Mammary epithelial cell (primary cell): ENCODE measurements at regions of chr20 and their contacts with region 1.

Region 1: GRCh38 chr20:50518270-50518721 is 8.1 kb downstream of the PTPN1 start:
- DNase-seq: peak; percentile 28
- H3K4me3 ChIP-seq: no peak overlapping the region
- H3K27ac ChIP-seq: peak overlapping the region; percentile 21
- H3K4me1 ChIP-seq: peaks cover 59% of the 10 kb centered on the region
- H3K27me3 ChIP-seq: no peaks in the 10 kb centered on the region
- CTCF ChIP-seq: no peak

Region 2: GRCh38 chr20:50534567-50535551 is 16.6 kb after region 1 on chr20:
- CTCF ChIA-PET with region 1: no interaction called
- dilution Hi-C with region 1: no loop called
- in situ Hi-C with region 1: no loop called
- intact Hi-C with region 1: loop called (anchors 2 kb)
- DNase-seq: no peak
- H3K4me3 ChIP-seq: no peak overlapping the region
- H3K27ac ChIP-seq: no peak overlapping the region
- H3K4me1 ChIP-seq: peaks cover 2% of the 10 kb centered on the region
- H3K27me3 ChIP-seq: no peaks in the 10 kb centered on the region
- CTCF ChIP-seq: no peak

Region 3: DNA sequence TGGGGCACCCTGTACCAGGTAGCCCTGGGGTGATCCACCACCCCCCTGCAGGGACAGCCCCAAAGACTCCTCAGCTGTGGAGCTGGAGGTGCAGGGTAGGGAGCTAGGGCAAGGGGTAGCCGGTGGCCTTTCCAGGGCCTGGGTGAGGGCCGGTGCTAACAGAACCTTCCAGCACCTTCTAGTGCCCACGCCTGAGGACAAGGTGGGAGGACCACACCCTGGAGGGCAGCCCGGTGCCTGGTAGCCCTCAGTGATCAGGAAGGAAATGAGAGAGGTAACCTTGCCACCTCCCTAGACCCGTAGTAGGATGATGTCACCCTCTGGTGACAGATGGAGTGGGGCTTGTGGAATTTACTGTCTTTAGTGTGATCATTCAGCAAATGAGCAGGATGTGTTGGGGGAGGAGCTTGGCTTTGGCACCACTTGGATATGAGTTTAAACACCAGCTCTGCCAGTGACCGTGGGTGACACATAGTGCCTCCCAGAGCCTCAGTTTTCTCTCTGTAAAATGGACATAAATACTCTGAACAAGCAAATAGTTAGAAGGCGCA is 836.5 kb after region 1 on chr20:
- CTCF ChIA-PET with region 1: no interaction called
- dilution Hi-C with region 1: no loop called
- in situ Hi-C with region 1: no loop called
- intact Hi-C with region 1: no loop called
- DNase-seq: no peak
- H3K4me3 ChIP-seq: no peak overlapping the region
- H3K27ac ChIP-seq: no peak overlapping the region
- H3K4me1 ChIP-seq: peaks cover under 1% of the 10 kb centered on the region
- H3K27me3 ChIP-seq: no peaks in the 10 kb centered on the region
- CTCF ChIP-seq: no peak